ENCODE measurements at regions of chr15 and their contacts with region 1.

Region 1: DNA sequence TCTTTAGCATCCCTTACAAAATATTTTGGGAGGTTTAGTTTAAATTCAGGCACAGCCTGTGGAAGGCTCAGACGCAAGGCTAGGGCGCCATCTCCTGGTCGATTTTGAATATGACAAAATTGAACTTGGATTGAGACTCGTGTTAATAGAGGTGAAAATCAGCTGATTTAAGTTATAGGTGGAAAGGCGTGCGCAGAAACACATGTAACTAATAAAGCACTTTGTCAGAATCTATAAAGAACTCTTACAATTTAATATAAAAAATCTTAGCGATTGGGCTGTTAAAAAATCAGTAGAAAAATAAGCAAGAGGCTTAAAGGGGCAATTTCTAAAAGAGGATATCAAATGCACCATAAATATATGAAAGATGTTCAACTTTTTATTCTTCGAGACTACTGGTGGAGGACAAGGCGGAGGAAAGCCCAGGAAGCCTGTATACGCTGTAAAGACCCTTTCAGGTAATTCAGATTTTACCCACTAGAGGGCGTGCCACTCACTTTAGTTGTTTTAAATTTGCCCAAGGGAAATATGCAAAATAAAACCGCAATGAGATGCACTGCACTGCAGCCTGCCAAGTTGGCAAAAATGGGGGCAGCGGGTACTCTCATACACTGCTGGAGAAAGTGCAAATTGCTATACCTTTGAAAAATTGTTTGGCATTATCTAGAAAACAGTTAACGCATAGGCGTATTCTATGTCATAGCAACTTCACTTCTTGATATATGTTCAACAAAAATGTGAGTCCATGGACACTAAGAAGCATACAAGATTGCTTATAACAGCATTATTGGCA is 64.7 kb downstream of the SLC30A4 start:
- DNase-seq: peak; percentile 88
- ATAC-seq: peak; percentile 70
- H3K4me3 Mint-ChIP-seq: peak overlapping the region; percentile 78
- H3K27ac Mint-ChIP-seq: peak overlapping the region; percentile 87
- H3K4me1 Mint-ChIP-seq: peaks cover 43% of the 10 kb centered on the region
- H3K27me3 Mint-ChIP-seq: no peaks in the 10 kb centered on the region
- CTCF ChIP-seq: peak; percentile 99

Region 2: GRCh38 chr15:45166834-45167630 is 290.8 kb before region 1 on chr15:
- CTCF ChIA-PET with region 1: interaction called, 14 read pairs
- POLR2A ChIA-PET with region 1: no interaction called
- intact Hi-C with region 1: no loop called
- DNase-seq: peak; percentile 89
- ATAC-seq: peak; percentile 91
- H3K4me3 Mint-ChIP-seq: peak overlapping the region; percentile 63
- H3K27ac Mint-ChIP-seq: peak overlapping the region; percentile 75
- H3K4me1 Mint-ChIP-seq: peaks cover 14% of the 10 kb centered on the region
- H3K27me3 Mint-ChIP-seq: no peaks in the 10 kb centered on the region
- CTCF ChIP-seq: peak; percentile 70

Region 3: DNA sequence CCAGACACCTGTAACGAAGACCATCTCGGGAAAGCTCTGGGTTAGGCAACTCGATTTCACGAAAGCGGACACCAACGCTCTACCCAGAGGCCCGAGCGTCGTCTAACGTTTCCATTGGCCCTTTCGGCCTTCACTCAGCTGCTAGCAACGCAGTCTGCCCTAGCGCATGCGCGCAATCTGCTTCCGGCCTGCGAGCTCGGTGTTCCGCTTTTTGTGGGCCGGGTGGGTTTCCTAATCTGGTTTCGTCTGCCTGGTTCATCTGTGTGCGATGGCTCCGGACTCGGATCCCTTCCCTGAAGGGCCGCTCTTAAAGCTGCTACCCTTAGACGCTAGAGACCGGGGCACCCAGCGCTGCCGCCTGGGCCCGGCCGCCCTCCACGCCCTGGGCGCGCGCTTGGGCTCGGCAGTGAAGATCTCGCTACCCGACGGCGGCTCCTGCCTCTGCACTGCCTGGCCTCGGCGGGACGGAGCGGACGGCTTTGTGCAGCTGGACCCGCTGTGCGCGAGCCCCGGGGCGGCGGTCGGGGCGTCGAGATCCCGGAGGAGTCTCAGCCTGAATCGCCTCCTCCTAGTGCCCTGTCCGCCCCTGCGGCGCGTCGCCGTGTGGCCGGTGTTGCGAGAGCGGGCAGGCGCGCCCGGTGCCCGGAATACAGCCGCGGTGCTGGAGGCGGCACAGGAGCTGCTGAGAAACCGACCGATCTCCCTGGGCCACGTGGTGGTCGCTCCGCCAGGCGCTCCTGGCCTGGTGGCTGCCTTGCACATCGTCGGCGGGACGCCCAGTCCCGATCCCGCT is 55.5 kb before region 1 on chr15:
- CTCF ChIA-PET with region 1: interaction called, 19 read pairs
- POLR2A ChIA-PET with region 1: interaction called, 9 read pairs
- intact Hi-C with region 1: no loop called
- DNase-seq: peak; percentile 96
- ATAC-seq: peak; percentile 97
- H3K4me3 Mint-ChIP-seq: peak overlapping the region; percentile 97
- H3K27ac Mint-ChIP-seq: peak overlapping the region; percentile 93
- H3K4me1 Mint-ChIP-seq: peaks cover 27% of the 10 kb centered on the region
- H3K27me3 Mint-ChIP-seq: no peaks in the 10 kb centered on the region
- CTCF ChIP-seq: no peak

Region 4: GRCh38 chr15:45425135-45425534 is 32.7 kb before region 1 on chr15:
- CTCF ChIA-PET with region 1: interaction called, 159 read pairs
- POLR2A ChIA-PET with region 1: no interaction called
- intact Hi-C with region 1: loop called (anchors 1 kb)
- DNase-seq: no peak
- ATAC-seq: no peak
- H3K4me3 Mint-ChIP-seq: no peak overlapping the region
- H3K27ac Mint-ChIP-seq: no peak overlapping the region
- H3K4me1 Mint-ChIP-seq: no peaks in the 10 kb centered on the region
- H3K27me3 Mint-ChIP-seq: no peaks in the 10 kb centered on the region
- CTCF ChIP-seq: no peak

Region 5: GRCh38 chr15:45442500-45443135 is 15.2 kb before region 1 on chr15:
- CTCF ChIA-PET with region 1: interaction called, 27 read pairs
- POLR2A ChIA-PET with region 1: no interaction called
- intact Hi-C with region 1: no loop called
- DNase-seq: no peak
- ATAC-seq: no peak
- H3K4me3 Mint-ChIP-seq: no peak overlapping the region
- H3K27ac Mint-ChIP-seq: no peak overlapping the region
- H3K4me1 Mint-ChIP-seq: no peaks in the 10 kb centered on the region
- H3K27me3 Mint-ChIP-seq: no peaks in the 10 kb centered on the region
- CTCF ChIP-seq: no peak

Region 6: GRCh38 chr15:45587095-45587860 is 129.4 kb after region 1 on chr15 and contains the start of gene BLOC1S6:
- CTCF ChIA-PET with region 1: interaction called, 51 read pairs
- POLR2A ChIA-PET with region 1: interaction called, 4 read pairs
- intact Hi-C with region 1: no loop called
- DNase-seq: peak; percentile 92
- ATAC-seq: peak; percentile 93
- H3K4me3 Mint-ChIP-seq: peak within 1 kb of the TSS; percentile 99
- H3K27ac Mint-ChIP-seq: peak within 1 kb of the TSS; percentile 100
- H3K4me1 Mint-ChIP-seq: peaks cover 40% of the 10 kb centered on the region
- H3K27me3 Mint-ChIP-seq: no peaks in the 10 kb centered on the region
- CTCF ChIP-seq: no peak
- total RNA-seq, gene BLOC1S6: 43.3 to 46.9 TPM

Region 7: DNA sequence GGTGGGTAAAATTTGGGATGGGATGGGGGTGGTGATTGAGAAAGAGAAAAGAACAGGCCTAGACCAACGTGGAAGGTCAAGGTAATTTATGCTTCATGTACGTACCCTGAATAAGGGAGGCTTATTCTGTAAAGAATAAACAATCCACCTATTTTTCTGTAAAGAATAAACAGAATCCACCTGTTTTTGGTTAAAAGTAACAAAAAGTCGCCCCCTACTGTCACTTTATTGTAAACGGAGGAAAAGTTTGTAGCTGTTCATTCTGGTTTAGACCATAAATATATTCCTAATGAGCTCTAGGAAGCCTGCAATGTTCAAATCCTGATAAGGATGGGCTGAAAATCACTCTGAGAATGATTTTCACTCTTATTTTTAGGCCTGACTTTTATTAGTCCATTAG is 153.5 kb after region 1 on chr15:
- CTCF ChIA-PET with region 1: interaction called, 92 read pairs
- POLR2A ChIA-PET with region 1: interaction called, 4 read pairs
- intact Hi-C with region 1: loop called (anchors 1 kb)
- DNase-seq: no peak
- ATAC-seq: no peak
- H3K4me3 Mint-ChIP-seq: no peak overlapping the region
- H3K27ac Mint-ChIP-seq: no peak overlapping the region
- H3K4me1 Mint-ChIP-seq: no peaks in the 10 kb centered on the region
- H3K27me3 Mint-ChIP-seq: no peaks in the 10 kb centered on the region
- CTCF ChIP-seq: peak; percentile 65